ENCODE measurements at regions of chr22 and their contacts with region 1.

Region 1: GRCh38 chr22:35257321-35258190 is at the start of gene HMGXB4:
- DNase-seq: peak; percentile 80 to 91 (median 87)
- ATAC-seq: peak; percentile 96
- H3K4me3 ChIP-seq: peak within 1 kb of the TSS; percentile 40
- H3K4me3 Mint-ChIP-seq: peak within 1 kb of the TSS; percentile 88 to 94 (median 93)
- H3K27ac ChIP-seq: peak within 1 kb of the TSS; percentile 98
- H3K27ac Mint-ChIP-seq: peak within 1 kb of the TSS; percentile 85 to 97 (median 95)
- H3K4me1 ChIP-seq: peaks cover 8 to 9% of the 10 kb centered on the region in 2 donors
- H3K4me1 Mint-ChIP-seq: peaks cover 15 to 42% (median 32%) of the 10 kb centered on the region in 7 donors
- H3K27me3 ChIP-seq: no peaks in the 10 kb centered on the region
- H3K27me3 Mint-ChIP-seq: peaks cover 0 to 5% (median 0%) of the 10 kb centered on the region in 5 donors
- total RNA-seq, gene HMGXB4: 23.3 to 39.1 (median 32.2) TPM

Region 2: DNA sequence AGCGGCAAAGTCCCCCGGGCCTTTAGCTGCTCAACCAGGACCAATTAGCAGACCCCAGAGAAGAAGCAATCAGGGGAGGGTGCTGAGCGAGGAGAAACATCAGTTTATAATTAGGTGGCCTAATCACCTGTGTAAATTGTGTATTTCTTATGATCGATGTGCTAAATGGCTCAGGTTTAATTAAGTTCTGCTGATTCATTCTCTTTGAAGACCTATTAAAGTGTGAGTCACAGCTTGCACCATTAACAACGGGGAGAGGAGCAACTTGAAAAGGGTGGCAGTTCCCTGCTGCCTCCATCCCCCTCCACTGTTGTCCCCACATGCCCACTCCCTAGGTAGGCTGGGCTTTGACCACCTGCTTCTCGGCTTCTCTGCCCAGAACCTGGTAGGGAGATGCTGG is 180.9 kb before region 1 on chr22:
- CTCF ChIA-PET with region 1: no interaction called
- POLR2A ChIA-PET with region 1: no interaction called
- intact Hi-C with region 1: no loop called
- DNase-seq: no peak
- ATAC-seq: no peak
- H3K4me3 ChIP-seq: no peak overlapping the region
- H3K4me3 Mint-ChIP-seq: no peak overlapping the region
- H3K27ac ChIP-seq: no peak overlapping the region
- H3K27ac Mint-ChIP-seq: no peak overlapping the region
- H3K4me1 ChIP-seq: no peaks in the 10 kb centered on the region
- H3K4me1 Mint-ChIP-seq: no peaks in the 10 kb centered on the region
- H3K27me3 ChIP-seq: no peaks in the 10 kb centered on the region
- H3K27me3 Mint-ChIP-seq: peaks cover 0 to 17% (median 9%) of the 10 kb centered on the region in 5 donors

Region 3: DNA sequence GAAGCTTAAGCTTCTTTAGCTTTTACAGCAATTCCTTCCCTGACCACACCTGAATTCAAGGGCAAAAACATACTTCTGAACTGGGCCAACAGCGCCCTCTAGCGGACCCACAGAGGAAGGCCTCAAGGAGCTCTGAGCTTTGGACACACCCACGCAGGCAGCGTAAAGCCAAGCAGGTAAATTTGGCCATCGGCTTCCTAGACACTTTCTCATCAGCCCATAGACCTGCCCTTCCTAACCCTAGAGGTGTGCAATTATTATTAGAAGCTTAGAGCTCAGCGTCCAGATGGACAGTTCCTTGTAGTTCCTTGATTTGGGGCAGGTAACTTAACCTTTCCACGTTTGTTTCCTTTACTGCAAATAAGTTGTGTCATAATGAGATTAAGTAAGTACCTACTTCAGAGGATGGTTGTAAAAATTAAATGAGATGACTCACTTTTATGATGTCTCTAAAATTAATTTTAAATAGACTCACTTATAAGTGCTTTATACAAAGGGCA is 25.9 kb before region 1 on chr22:
- CTCF ChIA-PET with region 1: no interaction called
- POLR2A ChIA-PET with region 1: no interaction called
- intact Hi-C with region 1: loop called (anchors 1 kb)
- DNase-seq: peak; percentile 49 to 75 (median 64)
- ATAC-seq: peak; percentile 91
- H3K4me3 ChIP-seq: no peak overlapping the region
- H3K4me3 Mint-ChIP-seq: no peak overlapping the region
- H3K27ac ChIP-seq: no peak overlapping the region
- H3K27ac Mint-ChIP-seq: peak overlapping the region in 1 of 9 donors; percentile 20
- H3K4me1 ChIP-seq: no peaks in the 10 kb centered on the region
- H3K4me1 Mint-ChIP-seq: peaks cover 4 to 17% (median 6%) of the 10 kb centered on the region in 7 donors
- H3K27me3 ChIP-seq: no peaks in the 10 kb centered on the region
- H3K27me3 Mint-ChIP-seq: peaks cover 12 to 54% (median 35%) of the 10 kb centered on the region in 5 donors

Region 4: GRCh38 chr22:35330258-35330861 is 72.8 kb after region 1 on chr22:
- CTCF ChIA-PET with region 1: interaction called, 3 read pairs
- POLR2A ChIA-PET with region 1: interaction called, 4 read pairs
- intact Hi-C with region 1: loop called in 1 of 2 experiments (anchors 2 kb)
- DNase-seq: peak in 8 of 9 donors; percentile 33 to 57 (median 46)
- ATAC-seq: peak; percentile 74
- H3K4me3 ChIP-seq: peak overlapping the region; percentile 13
- H3K4me3 Mint-ChIP-seq: peak overlapping the region; percentile 61 to 80 (median 73)
- H3K27ac ChIP-seq: peak overlapping the region; percentile 34
- H3K27ac Mint-ChIP-seq: peak overlapping the region; percentile 84 to 92 (median 90)
- H3K4me1 ChIP-seq: peaks cover 22 to 23% of the 10 kb centered on the region in 2 donors
- H3K4me1 Mint-ChIP-seq: peaks cover 12 to 38% (median 23%) of the 10 kb centered on the region in 7 donors
- H3K27me3 ChIP-seq: no peaks in the 10 kb centered on the region
- H3K27me3 Mint-ChIP-seq: no peaks in the 10 kb centered on the region

Region 5: GRCh38 chr22:35399678-35400334 is 142.2 kb after region 1 on chr22 and contains the start of gene MCM5:
- CTCF ChIA-PET with region 1: no interaction called
- POLR2A ChIA-PET with region 1: interaction called, 3 read pairs
- intact Hi-C with region 1: loop called in 1 of 2 experiments (anchors 2 kb)
- DNase-seq: peak; percentile 86 to 98 (median 97)
- ATAC-seq: peak; percentile 99
- H3K4me3 ChIP-seq: peak within 1 kb of the TSS; percentile 86
- H3K4me3 Mint-ChIP-seq: peak within 1 kb of the TSS; percentile 94 to 99 (median 99)
- H3K27ac ChIP-seq: peak within 1 kb of the TSS; percentile 80
- H3K27ac Mint-ChIP-seq: peak within 1 kb of the TSS; percentile 90 to 99 (median 96)
- H3K4me1 ChIP-seq: peaks cover 5 to 7% of the 10 kb centered on the region in 2 donors
- H3K4me1 Mint-ChIP-seq: peaks cover 16 to 35% (median 19%) of the 10 kb centered on the region in 7 donors
- H3K27me3 ChIP-seq: no peaks in the 10 kb centered on the region
- H3K27me3 Mint-ChIP-seq: no peaks in the 10 kb centered on the region
- total RNA-seq, gene MCM5: 34.7 to 208 (median 50.7) TPM

Region 6: GRCh38 chr22:35552196-35552842 is 294.8 kb after region 1 on chr22:
- CTCF ChIA-PET with region 1: no interaction called
- POLR2A ChIA-PET with region 1: no interaction called
- intact Hi-C with region 1: loop called in 1 of 2 experiments (anchors 5 kb)
- DNase-seq: peak; percentile 61 to 86 (median 83)
- ATAC-seq: peak; percentile 99
- H3K4me3 ChIP-seq: peak overlapping the region; percentile 48
- H3K4me3 Mint-ChIP-seq: peak overlapping the region; percentile 35 to 72 (median 56)
- H3K27ac ChIP-seq: no peak overlapping the region
- H3K27ac Mint-ChIP-seq: peak overlapping the region in 7 of 9 donors; percentile 5 to 85 (median 40)
- H3K4me1 ChIP-seq: peaks cover 8 to 15% of the 10 kb centered on the region in 2 donors
- H3K4me1 Mint-ChIP-seq: peaks cover 14 to 21% (median 19%) of the 10 kb centered on the region in 7 donors
- H3K27me3 ChIP-seq: no peaks in the 10 kb centered on the region
- H3K27me3 Mint-ChIP-seq: peaks cover 0 to 8% (median 0%) of the 10 kb centered on the region in 5 donors

Measured in naive thymus-derived CD4-positive, alpha-beta T cell (primary cell).